ENCODE measurements at regions of chr9 and their contacts with region 1.

Region 1: DNA sequence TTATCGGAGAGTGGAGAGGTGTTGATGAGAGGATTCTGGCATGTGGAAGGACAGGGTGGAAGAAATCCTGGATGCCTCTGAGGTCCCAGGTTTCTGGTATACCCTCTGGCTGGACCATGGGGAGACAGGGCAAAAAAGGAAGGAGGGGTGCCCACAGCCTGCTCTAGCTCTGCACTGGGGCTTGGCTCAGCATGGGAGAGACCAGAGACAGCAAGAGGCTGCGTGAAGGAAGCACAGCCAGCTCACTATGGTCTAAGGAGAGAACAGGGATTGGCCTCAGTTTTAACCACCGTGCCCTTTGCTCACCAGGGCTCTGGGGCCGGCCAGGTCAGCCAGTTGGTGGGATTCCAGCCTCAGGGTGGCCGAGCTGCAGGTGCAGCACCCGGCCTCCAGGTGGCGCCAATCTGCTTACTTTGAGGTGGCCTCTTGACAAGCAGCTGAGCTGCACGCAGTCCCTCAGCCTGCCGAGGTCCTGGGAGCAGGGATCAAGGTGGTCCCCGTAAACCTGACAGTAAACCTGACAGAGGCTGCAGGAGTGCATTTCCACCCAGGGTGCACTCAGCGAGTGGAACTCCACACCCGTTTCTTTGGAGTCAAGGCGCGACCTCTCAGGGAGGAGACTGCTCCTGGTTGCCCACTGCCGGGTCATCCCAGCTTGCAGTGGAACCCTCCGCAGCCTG is 25.0 kb upstream of the SPTLC1 start:
- DNase-seq: peak; percentile 85
- ATAC-seq: peak; percentile 62
- H3K4me3 Mint-ChIP-seq: no peak overlapping the region
- H3K27ac Mint-ChIP-seq: no peak overlapping the region
- H3K4me1 Mint-ChIP-seq: peaks cover 8% of the 10 kb centered on the region
- H3K27me3 Mint-ChIP-seq: peaks cover 30% of the 10 kb centered on the region

Region 2: GRCh38 chr9:91361291-91362050 is 778.7 kb before region 1 on chr9 and contains the start of gene AUH:
- CTCF ChIA-PET with region 1: no interaction called
- POLR2A ChIA-PET with region 1: no interaction called
- intact Hi-C with region 1: no loop called
- DNase-seq: peak; percentile 93
- ATAC-seq: peak; percentile 74
- H3K4me3 Mint-ChIP-seq: peak within 1 kb of the TSS; percentile 87
- H3K27ac Mint-ChIP-seq: peak within 1 kb of the TSS; percentile 86
- H3K4me1 Mint-ChIP-seq: peaks cover 53% of the 10 kb centered on the region
- H3K27me3 Mint-ChIP-seq: no peaks in the 10 kb centered on the region
- total RNA-seq, gene AUH: 30.4 to 30.8 TPM

Region 3: DNA sequence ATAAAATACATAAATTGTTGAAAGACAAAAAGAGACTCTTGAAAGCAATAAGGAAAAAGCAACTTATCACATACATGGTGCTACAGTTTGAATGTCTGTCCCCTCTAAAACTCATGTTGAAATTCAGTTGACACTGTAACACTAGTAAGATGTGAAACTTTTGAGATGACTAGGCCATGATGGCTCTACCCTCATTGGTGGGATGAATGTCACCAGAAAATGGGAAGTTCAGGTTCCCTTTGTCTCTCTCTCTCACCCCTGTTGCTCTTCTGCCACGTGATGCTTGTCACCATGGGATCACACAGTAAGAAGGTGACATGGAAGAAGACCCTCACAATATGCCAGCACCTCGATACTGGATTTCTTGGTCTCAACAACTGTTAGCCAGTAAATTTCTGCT is 25.3 kb after region 1 on chr9:
- CTCF ChIA-PET with region 1: interaction called, 13 read pairs
- POLR2A ChIA-PET with region 1: no interaction called
- intact Hi-C with region 1: no loop called
- DNase-seq: no peak
- ATAC-seq: no peak
- H3K4me3 Mint-ChIP-seq: no peak overlapping the region
- H3K27ac Mint-ChIP-seq: no peak overlapping the region
- H3K4me1 Mint-ChIP-seq: no peaks in the 10 kb centered on the region
- H3K27me3 Mint-ChIP-seq: peaks cover 5% of the 10 kb centered on the region

Region 4: DNA sequence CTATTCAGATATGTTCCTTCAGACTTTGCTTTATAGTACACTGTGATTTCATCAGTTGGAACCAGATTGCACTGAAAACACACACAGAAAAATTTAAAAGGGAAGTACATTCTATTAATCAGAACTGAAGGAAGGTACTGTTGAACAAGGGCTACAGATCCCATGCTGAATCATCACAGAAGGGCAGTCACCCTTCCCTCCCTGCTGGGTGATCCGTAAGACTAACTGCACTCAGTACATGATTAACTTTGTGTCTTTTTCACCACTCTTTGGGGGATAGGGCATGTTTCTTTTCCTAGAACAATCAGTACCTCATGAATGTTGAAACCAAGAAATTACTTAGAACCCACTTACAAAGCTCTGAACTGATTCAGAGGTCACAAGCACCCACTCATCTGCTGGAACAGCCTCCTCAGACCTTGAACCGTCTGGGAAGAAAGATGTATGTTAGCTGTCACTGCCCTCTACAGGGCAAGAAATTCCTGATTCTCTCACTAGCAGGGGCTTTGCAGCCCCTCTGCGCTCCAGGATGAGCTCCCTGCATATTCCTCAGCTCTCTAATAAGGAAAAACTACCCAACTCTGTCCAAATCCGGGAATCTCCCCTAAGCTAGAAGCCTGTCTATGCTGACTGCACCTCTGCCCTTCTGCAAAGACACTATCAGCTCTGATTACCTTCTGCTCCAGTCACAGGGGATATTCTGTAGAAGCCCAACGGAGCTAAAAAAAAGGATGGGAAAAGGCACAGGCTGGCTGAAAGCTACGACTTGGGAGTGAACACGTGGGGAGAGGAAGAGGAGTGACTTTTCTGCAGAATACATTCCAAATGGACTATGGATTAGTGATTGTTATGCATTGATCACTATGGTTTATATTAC is 102.3 kb after region 1 on chr9:
- CTCF ChIA-PET with region 1: interaction called, 14 read pairs
- POLR2A ChIA-PET with region 1: no interaction called
- intact Hi-C with region 1: loop called (anchors 5 to 10 kb)
- DNase-seq: no peak
- ATAC-seq: peak; percentile 30
- H3K4me3 Mint-ChIP-seq: no peak overlapping the region
- H3K27ac Mint-ChIP-seq: no peak overlapping the region
- H3K4me1 Mint-ChIP-seq: peaks cover 6% of the 10 kb centered on the region
- H3K27me3 Mint-ChIP-seq: no peaks in the 10 kb centered on the region

Region 5: DNA sequence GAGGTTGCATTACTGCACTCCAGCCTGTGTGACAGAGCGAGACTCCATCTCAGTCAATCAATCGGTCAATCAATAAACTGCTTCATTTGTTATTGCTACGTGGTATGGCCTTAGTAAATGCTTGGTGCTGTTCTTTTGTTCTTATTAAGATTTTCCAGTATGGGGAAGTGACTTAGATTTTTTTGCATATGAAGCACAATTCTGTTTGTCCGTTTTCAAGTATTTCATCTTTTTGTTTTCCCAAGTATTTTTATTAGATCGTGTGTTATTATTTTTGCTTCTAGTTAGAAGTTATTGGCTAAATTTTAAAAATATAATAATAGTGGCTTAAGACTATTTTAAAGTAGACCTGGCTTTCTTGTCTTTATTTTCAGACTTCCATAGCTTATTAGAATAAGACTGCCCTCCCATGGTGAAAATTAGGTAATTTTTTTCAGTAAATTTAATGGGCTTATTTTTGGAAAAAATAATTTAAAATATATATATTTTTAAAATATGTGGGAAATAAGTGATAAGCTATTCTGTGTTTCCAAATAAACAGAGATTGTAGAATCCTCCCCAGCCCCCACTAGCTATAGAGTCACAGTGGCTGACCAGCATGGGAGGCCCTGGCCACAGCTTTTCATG is 298.8 kb after region 1 on chr9:
- CTCF ChIA-PET with region 1: interaction called, 5 read pairs
- POLR2A ChIA-PET with region 1: no interaction called
- intact Hi-C with region 1: loop called in 1 of 2 experiments (anchors 2 kb)
- DNase-seq: no peak
- ATAC-seq: no peak
- H3K4me3 Mint-ChIP-seq: no peak overlapping the region
- H3K27ac Mint-ChIP-seq: no peak overlapping the region
- H3K4me1 Mint-ChIP-seq: peaks cover 3% of the 10 kb centered on the region
- H3K27me3 Mint-ChIP-seq: no peaks in the 10 kb centered on the region

Region 6: DNA sequence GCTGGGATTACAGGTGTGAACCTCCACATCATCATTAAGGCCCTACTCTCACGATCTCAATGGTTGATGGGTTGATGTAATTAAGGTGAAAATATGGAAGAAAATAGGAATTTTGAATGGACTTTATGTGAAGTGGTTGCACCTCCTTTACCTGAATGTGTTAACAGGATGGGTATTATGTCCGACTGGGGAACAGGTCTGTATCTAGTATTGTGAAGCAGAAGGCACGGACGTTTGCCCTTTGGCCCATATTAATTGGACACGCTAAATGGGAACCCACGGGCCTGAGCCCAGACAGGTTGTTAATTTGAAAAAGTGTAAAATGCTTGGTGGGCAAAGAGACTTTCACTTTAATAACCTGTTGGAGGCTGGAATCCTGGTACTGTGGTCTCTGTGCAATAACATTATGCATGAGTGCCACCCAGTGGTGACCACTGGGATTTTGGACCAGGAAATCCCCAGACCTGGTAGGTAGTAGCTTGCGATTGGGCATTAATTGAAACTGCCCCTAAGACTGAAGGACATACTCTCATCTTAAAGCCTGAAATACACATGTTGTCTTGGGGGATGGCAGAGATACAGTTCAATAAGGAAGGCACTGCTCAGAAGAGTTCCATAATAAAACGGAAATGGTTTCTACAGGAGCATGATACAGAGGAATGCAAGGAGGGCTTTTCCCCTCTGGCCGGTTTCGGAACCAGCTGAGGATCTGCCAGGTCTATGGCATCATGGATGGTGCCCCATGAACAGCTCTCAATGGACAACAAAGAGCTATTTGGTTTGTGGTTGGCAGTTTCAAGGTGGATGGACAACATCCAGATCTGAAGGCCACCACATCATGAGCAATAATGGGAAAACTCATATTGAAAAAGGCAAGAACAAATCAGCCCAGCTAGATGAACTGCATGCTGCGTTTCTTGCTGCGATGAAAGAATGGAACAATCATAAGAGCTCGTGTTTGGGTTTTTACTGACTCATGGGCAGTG is 650.6 kb after region 1 on chr9:
- CTCF ChIA-PET with region 1: interaction called, 5 read pairs
- POLR2A ChIA-PET with region 1: no interaction called
- intact Hi-C with region 1: loop called (anchors 2 kb)
- DNase-seq: peak; percentile 84
- ATAC-seq: peak; percentile 87
- H3K4me3 Mint-ChIP-seq: no peak overlapping the region
- H3K27ac Mint-ChIP-seq: no peak overlapping the region
- H3K4me1 Mint-ChIP-seq: peaks cover 9% of the 10 kb centered on the region
- H3K27me3 Mint-ChIP-seq: no peaks in the 10 kb centered on the region